Activated CD8-positive, alpha-beta T cell treated with anti-CD3 and anti-CD28 coated beads, Interleukin-2, amount 10 ng/mL, durations not matched to agents 7 days and 5 days (primary cell): ENCODE measurements at regions of chr1 and their contacts with region 1.

Region 1: DNA sequence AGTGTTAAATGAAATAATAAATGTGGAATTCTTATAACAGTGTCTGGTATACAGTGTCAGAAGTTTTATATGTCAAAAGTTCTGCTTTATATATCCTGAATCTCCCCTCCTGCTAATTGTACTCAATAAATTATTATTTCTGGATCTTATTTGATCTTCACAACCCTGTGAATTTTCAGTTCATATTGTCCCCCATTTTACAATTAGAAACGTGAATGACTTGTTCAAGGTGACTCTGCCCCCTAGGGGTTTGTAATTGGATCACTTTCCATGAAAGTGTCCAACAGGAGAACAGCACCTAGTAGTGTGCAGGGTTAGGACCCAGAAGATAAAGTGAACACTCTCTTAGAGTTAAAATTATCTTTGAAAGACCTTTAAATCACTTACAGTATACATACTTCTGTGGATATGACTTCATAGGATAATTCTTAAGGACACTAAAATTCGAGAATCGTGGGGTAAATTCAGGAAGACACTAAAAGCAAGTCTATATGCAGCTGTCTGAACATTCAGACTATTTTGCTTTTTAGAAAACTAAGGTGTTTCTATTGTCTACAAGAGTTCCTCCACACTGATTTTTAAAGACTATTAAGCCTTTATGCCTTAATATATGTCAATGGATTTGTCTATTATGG is 4.5 kb upstream of the DDR2 start:
- DNase-seq: no peak
- ATAC-seq: no peak
- H3K4me3 Mint-ChIP-seq: no peak overlapping the region
- H3K27ac Mint-ChIP-seq: no peak overlapping the region
- H3K4me1 Mint-ChIP-seq: no peaks in the 10 kb centered on the region
- H3K27me3 Mint-ChIP-seq: peaks cover 5% of the 10 kb centered on the region

Region 2: GRCh38 chr1:162612606-162613400 is 15.0 kb before region 1 on chr1:
- CTCF ChIA-PET with region 1: interaction called, 13 read pairs
- POLR2A ChIA-PET with region 1: no interaction called
- DNase-seq: no peak
- ATAC-seq: no peak
- H3K4me3 Mint-ChIP-seq: no peak overlapping the region
- H3K27ac Mint-ChIP-seq: no peak overlapping the region
- H3K4me1 Mint-ChIP-seq: no peaks in the 10 kb centered on the region
- H3K27me3 Mint-ChIP-seq: no peaks in the 10 kb centered on the region